Activated CD8-positive, alpha-beta T cell treated with anti-CD3 and anti-CD28 coated beads for 36 hours (primary cell): ENCODE measurements at regions of chr6 and their contacts with region 1.

Region 1: DNA sequence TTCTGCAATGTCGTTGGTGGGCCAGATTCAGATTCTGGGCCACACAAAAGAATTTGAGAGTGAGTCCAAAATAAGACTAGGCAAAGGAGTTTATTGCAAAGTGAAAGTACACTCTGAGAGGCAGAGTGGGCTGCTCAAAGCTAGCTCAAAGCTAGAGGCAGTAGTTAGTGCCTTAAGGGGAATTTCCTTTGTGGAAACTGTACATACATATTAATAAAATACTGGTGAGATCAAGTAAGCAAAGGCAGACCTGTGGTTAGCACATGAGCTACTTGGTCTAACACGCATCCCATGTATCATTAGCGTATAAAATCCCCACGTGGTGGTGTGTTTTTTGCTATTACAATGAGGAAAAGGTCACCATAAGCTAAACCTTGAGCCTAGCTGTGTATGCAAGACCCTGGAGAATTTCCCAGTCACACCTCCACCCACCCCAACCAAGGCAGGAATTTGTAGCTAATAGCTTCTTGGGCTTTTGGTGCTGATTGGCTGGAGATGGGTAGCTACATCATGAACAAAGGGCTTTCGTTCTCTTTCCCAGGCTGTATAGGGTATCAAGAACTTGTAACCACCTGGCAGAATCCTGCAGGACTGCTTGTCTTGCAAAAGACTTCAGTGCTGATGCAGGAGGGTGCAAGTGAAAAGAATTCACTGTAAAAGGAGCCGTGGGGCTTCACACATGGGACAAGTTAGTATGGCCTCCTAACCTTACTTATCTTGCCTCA is 14.7 kb upstream of the TRIM26 start:
- DNase-seq: peak; percentile 63
- ATAC-seq: peak; percentile 93
- H3K4me3 Mint-ChIP-seq: peak overlapping the region; percentile 58
- H3K27ac Mint-ChIP-seq: peak overlapping the region; percentile 94
- H3K4me1 Mint-ChIP-seq: peaks cover 19% of the 10 kb centered on the region
- H3K27me3 Mint-ChIP-seq: peaks cover 10% of the 10 kb centered on the region
- CTCF ChIP-seq: no peak

Region 2: GRCh38 chr6:30212865-30213666 is 14.9 kb before region 1 on chr6 and contains the start of gene TRIM26:
- CTCF ChIA-PET with region 1: interaction called, 94 read pairs
- POLR2A ChIA-PET with region 1: interaction called, 22 read pairs
- intact Hi-C with region 1: no loop called
- DNase-seq: peak; percentile 98
- ATAC-seq: peak; percentile 87
- H3K4me3 Mint-ChIP-seq: peak within 1 kb of the TSS; percentile 90
- H3K27ac Mint-ChIP-seq: peak within 1 kb of the TSS; percentile 99
- H3K4me1 Mint-ChIP-seq: peaks cover 48% of the 10 kb centered on the region
- H3K27me3 Mint-ChIP-seq: no peaks in the 10 kb centered on the region
- CTCF ChIP-seq: no peak
- total RNA-seq, gene TRIM26: 43.4 to 45.0 TPM

Region 3: GRCh38 chr6:30238174-30238795 is 10.4 kb after region 1 on chr6:
- CTCF ChIA-PET with region 1: interaction called, 19 read pairs
- POLR2A ChIA-PET with region 1: interaction called, 3 read pairs
- intact Hi-C with region 1: no loop called
- DNase-seq: peak; percentile 39
- ATAC-seq: peak; percentile 70
- H3K4me3 Mint-ChIP-seq: no peak overlapping the region
- H3K27ac Mint-ChIP-seq: no peak overlapping the region
- H3K4me1 Mint-ChIP-seq: no peaks in the 10 kb centered on the region
- H3K27me3 Mint-ChIP-seq: peaks cover 20% of the 10 kb centered on the region
- CTCF ChIP-seq: peak; percentile 44